ENCODE measurements at regions of chr9 and their contacts with region 1.

Region 1: DNA sequence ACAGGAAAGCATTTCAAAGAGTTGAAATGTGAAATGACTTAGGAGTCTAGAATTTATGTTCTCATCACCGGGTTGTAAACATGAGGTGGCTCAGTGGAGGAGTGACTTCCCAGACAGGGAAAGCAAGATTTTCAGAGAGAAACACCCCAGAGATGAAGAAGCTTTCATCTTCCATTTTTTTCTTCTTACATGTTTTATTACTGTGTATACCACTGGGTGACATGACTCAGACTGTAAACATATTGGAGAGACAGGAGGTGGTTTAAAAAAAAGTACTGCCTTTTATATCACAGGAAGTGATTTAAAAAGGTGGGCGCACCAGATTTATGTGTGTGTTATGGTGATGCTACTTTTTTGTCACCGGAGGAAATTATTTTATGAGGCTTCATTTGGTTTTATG is 209.1 kb upstream of the TUT7 start:
- DNase-seq: no peak
- H3K4me3 ChIP-seq: no peak overlapping the region
- H3K4me3 Mint-ChIP-seq: no peak overlapping the region
- H3K27ac ChIP-seq: no peak overlapping the region
- H3K27ac Mint-ChIP-seq: no peak overlapping the region
- H3K4me1 ChIP-seq: no peaks in the 10 kb centered on the region
- H3K4me1 Mint-ChIP-seq: no peaks in the 10 kb centered on the region
- H3K27me3 ChIP-seq: no peaks in the 10 kb centered on the region
- H3K27me3 Mint-ChIP-seq: no peaks in the 10 kb centered on the region
- CTCF ChIP-seq: no peak

Region 2: DNA sequence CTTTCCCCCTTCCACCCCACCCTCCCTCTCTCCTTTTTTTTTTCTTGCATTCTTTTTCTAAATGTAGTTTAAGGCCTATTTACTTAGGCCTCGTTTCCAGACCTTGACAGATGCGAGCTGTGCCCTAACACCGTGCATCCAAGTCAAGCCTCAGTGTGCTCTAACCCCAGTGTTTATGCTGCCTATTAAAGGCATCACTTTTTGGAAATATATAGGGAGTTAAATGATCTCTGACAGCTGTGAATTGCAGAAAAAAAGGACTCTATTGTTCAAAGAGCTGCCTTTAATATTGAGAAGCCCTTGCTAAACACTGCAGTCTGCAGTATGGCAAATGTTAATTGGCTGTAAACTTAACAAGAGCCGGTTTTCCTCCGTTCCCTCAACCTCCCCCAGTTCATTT is 61.3 kb after region 1 on chr9:
- intact Hi-C with region 1: loop called in 1 of 2 experiments (anchors 10 kb)
- DNase-seq: no peak
- H3K4me3 ChIP-seq: no peak overlapping the region
- H3K4me3 Mint-ChIP-seq: no peak overlapping the region
- H3K27ac ChIP-seq: no peak overlapping the region
- H3K27ac Mint-ChIP-seq: no peak overlapping the region
- H3K4me1 ChIP-seq: no peaks in the 10 kb centered on the region
- H3K4me1 Mint-ChIP-seq: no peaks in the 10 kb centered on the region
- H3K27me3 ChIP-seq: no peaks in the 10 kb centered on the region
- H3K27me3 Mint-ChIP-seq: peaks cover 3 to 7% (median 4%) of the 10 kb centered on the region in 3 donors
- CTCF ChIP-seq: no peak

Measured in CD14-positive monocyte (primary cell).